CD4-positive, alpha-beta memory T cell (primary cell): ENCODE measurements at regions of chr17 and their contacts with region 1.

Region 1: DNA sequence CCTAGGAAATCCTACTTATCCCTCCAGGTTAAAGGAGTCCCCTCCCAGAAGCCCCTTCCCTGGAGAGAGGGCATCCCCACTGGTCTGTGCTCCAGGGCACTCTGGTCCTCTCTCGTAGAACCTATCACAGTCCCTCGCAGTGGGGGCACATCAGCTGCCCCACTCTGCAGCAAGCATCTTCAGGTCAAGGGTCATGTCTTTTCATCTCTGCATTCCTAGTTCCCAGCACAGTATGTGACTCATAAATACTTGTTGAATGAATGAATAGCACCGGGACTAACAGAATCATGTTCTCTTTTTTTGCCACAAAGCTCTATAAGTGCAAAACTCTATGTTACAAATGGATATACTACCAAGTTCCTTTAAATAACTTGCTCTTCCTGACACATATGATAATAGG is 36.0 kb downstream of the RNF157 start:
- DNase-seq: no peak
- H3K4me3 ChIP-seq: no peak overlapping the region
- H3K4me3 Mint-ChIP-seq: no peak overlapping the region
- H3K27ac ChIP-seq: no peak overlapping the region
- H3K27ac Mint-ChIP-seq: peak overlapping the region in 4 of 7 donors; percentile 53 to 70 (median 56)
- H3K4me1 ChIP-seq: peaks cover 73% of the 10 kb centered on the region
- H3K4me1 Mint-ChIP-seq: peaks cover 41 to 75% (median 63%) of the 10 kb centered on the region in 4 donors
- H3K27me3 ChIP-seq: no peaks in the 10 kb centered on the region
- H3K27me3 Mint-ChIP-seq: no peaks in the 10 kb centered on the region

Region 2: DNA sequence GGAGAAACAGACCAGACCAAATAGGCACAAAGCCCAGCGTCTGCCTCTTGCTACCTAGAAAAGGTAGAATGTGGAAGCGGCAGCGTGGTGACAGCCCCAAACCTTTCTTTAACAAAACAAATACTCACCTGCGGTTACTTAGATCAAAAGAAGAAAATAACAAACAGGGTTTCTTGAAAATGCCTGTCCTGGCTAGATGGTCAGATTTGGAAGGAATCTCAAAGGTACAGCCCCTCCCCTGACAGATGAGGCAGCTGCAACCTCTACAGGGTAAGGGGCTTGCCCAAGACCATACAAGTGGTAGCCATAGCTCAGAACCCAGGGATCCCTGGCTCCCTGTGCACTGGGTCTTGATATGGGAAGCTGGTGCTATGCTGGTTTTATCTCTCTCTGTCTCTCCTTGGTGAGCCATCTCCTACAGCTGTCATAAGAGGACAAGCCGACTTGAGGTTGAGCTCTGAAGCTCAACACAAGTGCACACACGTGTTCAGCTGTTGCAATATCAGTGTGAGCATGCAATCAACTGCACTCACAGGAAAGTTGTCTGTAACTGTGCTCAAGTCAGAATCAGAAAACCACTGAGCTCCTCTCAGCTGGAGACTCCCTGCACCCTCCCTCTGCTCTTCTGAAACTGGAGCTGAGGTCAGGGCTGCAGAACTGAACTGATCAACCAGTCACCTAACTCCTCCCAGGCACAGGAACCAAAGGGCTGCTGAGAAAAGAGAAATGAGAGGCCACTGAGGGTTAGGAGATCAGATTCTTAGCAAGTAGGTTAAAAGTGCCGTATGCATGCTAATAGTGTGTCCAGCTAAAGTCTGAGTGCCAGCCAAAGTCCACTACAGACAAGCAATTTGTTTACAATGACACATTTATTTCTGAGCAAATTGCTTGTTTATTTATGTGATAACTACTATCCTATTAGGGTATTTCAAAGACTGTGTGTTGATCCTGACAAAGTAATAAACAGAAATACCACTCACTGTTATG is 42.1 kb after region 1 on chr17:
- CTCF ChIA-PET with region 1: interaction called, 3 read pairs
- POLR2A ChIA-PET with region 1: interaction called, 29 read pairs
- intact Hi-C with region 1: no loop called
- DNase-seq: peak; percentile 47 to 61 (median 58)
- H3K4me3 ChIP-seq: peak overlapping the region in 1 of 2 donors; percentile 11
- H3K4me3 Mint-ChIP-seq: peak overlapping the region in 7 of 8 donors; percentile 59 to 85 (median 83)
- H3K27ac ChIP-seq: peak overlapping the region; percentile 25
- H3K27ac Mint-ChIP-seq: peak overlapping the region; percentile 71 to 94 (median 91)
- H3K4me1 ChIP-seq: peaks cover 67% of the 10 kb centered on the region
- H3K4me1 Mint-ChIP-seq: peaks cover 18 to 81% (median 50%) of the 10 kb centered on the region in 4 donors
- H3K27me3 ChIP-seq: no peaks in the 10 kb centered on the region
- H3K27me3 Mint-ChIP-seq: no peaks in the 10 kb centered on the region

Region 3: GRCh38 chr17:76252040-76252954 is 48.0 kb after region 1 on chr17:
- CTCF ChIA-PET with region 1: interaction called, 3 read pairs
- POLR2A ChIA-PET with region 1: interaction called, 12 read pairs
- intact Hi-C with region 1: no loop called
- DNase-seq: peak in 3 of 5 donors; percentile 55 to 57 (median 55)
- H3K4me3 ChIP-seq: peak overlapping the region; percentile 3 to 5
- H3K4me3 Mint-ChIP-seq: peak overlapping the region; percentile 69 to 89 (median 81)
- H3K27ac ChIP-seq: peak overlapping the region; percentile 51
- H3K27ac Mint-ChIP-seq: peak overlapping the region; percentile 82 to 97 (median 96)
- H3K4me1 ChIP-seq: peaks cover 68% of the 10 kb centered on the region
- H3K4me1 Mint-ChIP-seq: peaks cover 31 to 71% (median 53%) of the 10 kb centered on the region in 4 donors
- H3K27me3 ChIP-seq: no peaks in the 10 kb centered on the region
- H3K27me3 Mint-ChIP-seq: no peaks in the 10 kb centered on the region

Region 4: DNA sequence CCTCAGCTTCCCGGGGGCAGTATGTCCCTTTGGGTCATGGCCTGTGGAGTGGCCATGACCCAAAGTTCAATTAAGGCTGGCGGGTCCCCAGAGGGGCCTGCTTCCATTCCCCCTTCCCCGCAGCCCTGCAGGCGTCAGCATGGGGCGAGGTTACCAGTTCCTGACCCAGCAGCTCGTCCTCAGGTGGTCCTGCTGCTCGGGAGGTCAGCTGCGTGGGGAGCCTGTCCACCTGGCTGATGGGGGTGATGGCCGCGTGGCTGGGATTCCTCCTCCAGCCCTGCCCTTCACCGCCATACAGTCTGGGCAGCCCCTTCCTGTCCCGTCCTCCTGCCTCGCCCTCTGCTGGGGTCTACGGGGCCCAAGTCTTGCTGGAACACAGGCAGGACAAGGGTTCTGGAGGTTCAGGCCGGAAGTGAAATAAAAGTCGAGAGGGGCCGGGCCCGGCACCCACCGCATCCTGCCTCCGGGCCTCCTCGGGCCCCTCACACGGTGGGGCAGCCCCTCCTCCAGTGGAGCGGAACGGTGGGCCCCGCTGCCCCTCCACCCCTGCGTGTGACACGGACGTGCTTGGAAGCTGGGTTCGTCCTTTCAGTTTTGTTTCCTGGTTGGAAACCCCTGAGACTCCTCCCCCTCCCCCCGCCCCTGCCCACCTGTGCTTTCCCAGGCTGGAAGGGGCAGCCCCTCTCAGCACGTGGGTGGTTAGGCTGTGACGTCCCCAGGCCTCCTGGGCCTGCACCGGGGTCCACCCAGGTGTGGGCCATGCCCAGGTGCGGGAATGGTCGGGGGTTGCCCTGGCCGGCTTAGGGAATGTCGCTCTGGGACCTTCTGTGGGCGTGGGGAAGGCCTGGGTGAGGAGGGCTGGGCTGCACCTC is 67.6 kb after region 1 on chr17:
- CTCF ChIA-PET with region 1: interaction called, 3 read pairs
- POLR2A ChIA-PET with region 1: interaction called, 80 read pairs
- intact Hi-C with region 1: no loop called
- DNase-seq: peak; percentile 56 to 85 (median 59)
- H3K4me3 ChIP-seq: peak overlapping the region in 1 of 2 donors; percentile 68
- H3K4me3 Mint-ChIP-seq: peak overlapping the region; percentile 78 to 90 (median 82)
- H3K27ac ChIP-seq: peak overlapping the region; percentile 89
- H3K27ac Mint-ChIP-seq: peak overlapping the region; percentile 86 to 96 (median 92)
- H3K4me1 ChIP-seq: peaks cover 79% of the 10 kb centered on the region
- H3K4me1 Mint-ChIP-seq: peaks cover 21 to 86% (median 48%) of the 10 kb centered on the region in 4 donors
- H3K27me3 ChIP-seq: no peaks in the 10 kb centered on the region
- H3K27me3 Mint-ChIP-seq: no peaks in the 10 kb centered on the region